Heart left ventricle (tissue), 16 donors: ENCODE measurements at regions of chr15 and their contacts with region 1.

Region 1: GRCh38 chr15:40694688-40695468 is at the start of gene RAD51:
- DNase-seq: peak; percentile 93 to 95 (median 95)
- ATAC-seq: peak; percentile 97 to 99 (median 99)
- H3K4me3 ChIP-seq: peak within 1 kb of the TSS; percentile 63 to 96 (median 84)
- H3K27ac ChIP-seq: peak within 1 kb of the TSS; percentile 93 to 100 (median 99)
- H3K4me1 ChIP-seq: peaks cover 0 to 21% (median 14%) of the 10 kb centered on the region in 12 donors
- H3K27me3 ChIP-seq: no peaks in the 10 kb centered on the region
- CTCF ChIP-seq: no peak
- POLR2A ChIP-seq: peak in 1 of 2 donors; percentile 74
- total RNA-seq, gene RAD51: 0.48 to 3.9 (median 0.65) TPM in 7 of 9 donors, not detected in the others

Region 2: GRCh38 chr15:40593588-40594428 is 101.1 kb before region 1 on chr15 and contains the start of gene KNL1:
- intact Hi-C with region 1: loop called in 3 of 10 experiments (anchors 1 to 10 kb)
- DNase-seq: peak; percentile 83 to 94 (median 90)
- ATAC-seq: peak; percentile 95 to 97 (median 96)
- H3K4me3 ChIP-seq: peak within 1 kb of the TSS; percentile 51 to 80 (median 60)
- H3K27ac ChIP-seq: peak within 1 kb of the TSS; percentile 83 to 98 (median 88)
- H3K4me1 ChIP-seq: peaks cover 0 to 24% (median 7%) of the 10 kb centered on the region in 12 donors
- H3K27me3 ChIP-seq: no peaks in the 10 kb centered on the region
- CTCF ChIP-seq: peak in 1 of 12 donors; percentile 0
- POLR2A ChIP-seq: no peak
- total RNA-seq, gene KNL1: 0.11 to 5.9 (median 1.0) TPM in 8 of 9 donors, not detected in the other

Region 3: GRCh38 chr15:40746916-40747514 is 52.1 kb after region 1 on chr15:
- intact Hi-C with region 1: loop called in 4 of 10 experiments (anchors 5 to 10 kb)
- DNase-seq: no peak
- ATAC-seq: peak in 1 of 4 donors; percentile 39
- H3K4me3 ChIP-seq: no peak overlapping the region
- H3K27ac ChIP-seq: no peak overlapping the region
- H3K4me1 ChIP-seq: peaks cover 0 to 44% (median 0%) of the 10 kb centered on the region in 12 donors
- H3K27me3 ChIP-seq: no peaks in the 10 kb centered on the region
- CTCF ChIP-seq: no peak
- POLR2A ChIP-seq: no peak

Region 4: DNA sequence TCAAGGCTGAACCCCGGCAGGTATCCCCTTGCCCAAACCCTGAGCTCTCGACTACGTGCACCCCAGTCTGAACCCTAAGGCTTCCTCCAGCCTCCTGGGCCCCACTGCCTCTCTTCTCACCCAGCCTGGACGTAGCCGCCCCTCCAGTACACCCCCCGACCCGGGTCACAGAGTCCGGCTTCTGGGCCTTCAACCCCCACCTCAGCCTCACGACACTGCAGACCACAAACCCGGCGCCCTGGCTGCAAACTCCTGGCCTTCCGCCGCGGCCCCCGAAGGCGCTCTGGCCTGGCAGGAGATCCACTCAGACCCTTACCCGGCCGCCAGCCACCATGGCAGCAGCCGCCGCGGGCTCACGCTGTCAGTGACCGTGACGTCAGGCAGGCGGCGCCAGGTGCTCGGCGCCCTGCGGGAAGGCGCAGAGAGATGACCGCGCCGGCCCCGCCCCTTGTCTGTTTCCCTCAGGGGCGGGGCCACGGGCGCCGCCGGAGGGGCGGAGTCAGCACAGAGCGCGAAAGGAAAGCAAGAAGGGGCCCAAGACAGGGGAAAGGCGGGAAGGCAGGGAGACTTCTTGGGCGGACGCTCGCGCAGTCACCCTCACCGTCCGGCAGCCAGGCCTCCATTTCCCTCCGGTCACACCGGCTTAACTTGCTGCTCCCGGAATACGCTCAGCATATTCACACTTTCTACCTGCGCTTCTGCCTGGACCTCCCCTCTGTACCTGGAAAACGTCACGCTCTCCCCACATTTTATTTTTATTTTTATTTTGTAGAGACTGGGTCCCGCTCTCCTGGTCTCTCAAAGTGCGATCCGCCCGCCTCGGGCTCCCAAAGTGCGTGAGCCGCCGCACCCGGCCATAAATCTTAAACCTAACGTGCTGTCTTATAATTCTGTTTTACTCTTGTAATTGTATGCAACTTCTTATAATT is 60.3 kb after region 1 on chr15 and contains the start of gene RMDN3:
- intact Hi-C with region 1: loop called in 3 of 10 experiments (anchors 10 kb)
- DNase-seq: peak; percentile 93 to 97 (median 94)
- ATAC-seq: peak; percentile 94 to 100 (median 98)
- H3K4me3 ChIP-seq: peak within 1 kb of the TSS; percentile 70 to 98 (median 86)
- H3K27ac ChIP-seq: peak within 1 kb of the TSS in 11 of 12 donors; percentile 51 to 85 (median 80)
- H3K4me1 ChIP-seq: peaks cover 0 to 24% (median 12%) of the 10 kb centered on the region in 12 donors
- H3K27me3 ChIP-seq: no peaks in the 10 kb centered on the region
- CTCF ChIP-seq: peak in 3 of 12 donors; percentile 20 to 33 (median 29)
- POLR2A ChIP-seq: peak in 1 of 2 donors; percentile 76
- total RNA-seq, gene RMDN3: 12.0 to 22.9 (median 18.5) TPM

Region 5: DNA sequence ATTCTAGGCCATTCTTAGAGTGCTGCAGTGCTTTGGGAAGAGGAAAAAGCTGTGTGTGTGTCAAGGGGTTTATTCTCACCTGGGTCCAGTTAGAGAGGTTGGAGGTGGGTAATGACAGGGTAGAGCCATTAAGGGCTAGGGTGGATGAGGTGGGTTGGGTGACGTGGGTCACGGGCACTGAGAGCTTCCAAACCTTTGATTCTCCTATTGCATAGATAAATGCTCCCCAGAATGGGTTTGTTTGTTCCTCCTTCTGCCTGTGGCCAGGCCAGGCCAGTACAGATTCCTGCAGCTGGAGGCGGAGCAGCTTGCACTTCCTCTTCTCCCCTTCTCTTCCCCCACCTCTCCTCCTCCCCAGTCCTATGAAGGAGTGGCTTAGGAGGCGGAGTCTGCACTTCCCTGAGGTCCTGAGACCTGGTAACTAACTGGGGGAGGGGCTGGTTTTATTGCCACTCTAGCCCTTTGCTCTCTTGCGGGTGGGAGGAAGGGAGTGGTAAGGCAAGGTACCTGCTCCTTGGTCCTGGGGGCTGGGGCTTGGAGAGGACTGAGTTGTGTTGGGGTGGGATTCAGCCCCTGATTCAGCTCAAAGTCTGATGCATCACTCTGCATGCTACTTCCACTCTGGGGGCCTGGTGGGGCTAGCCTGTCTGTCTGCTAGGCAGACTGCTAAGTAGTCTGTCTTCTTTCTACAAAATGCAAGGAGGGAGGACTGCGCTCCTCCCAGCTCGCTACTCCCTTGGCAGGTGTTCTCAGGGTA is 152.5 kb after region 1 on chr15:
- intact Hi-C with region 1: no loop called
- DNase-seq: peak in 4 of 5 donors; percentile 44 to 58 (median 48)
- ATAC-seq: peak; percentile 64 to 84 (median 80)
- H3K4me3 ChIP-seq: peak overlapping the region in 1 of 12 donors; percentile 4
- H3K27ac ChIP-seq: peak overlapping the region in 1 of 12 donors; percentile 73
- H3K4me1 ChIP-seq: peaks cover 0 to 37% (median 10%) of the 10 kb centered on the region in 12 donors
- H3K27me3 ChIP-seq: peaks cover 9 to 40% (median 19%) of the 10 kb centered on the region in 9 donors
- CTCF ChIP-seq: no peak
- POLR2A ChIP-seq: no peak